ENCODE measurements at regions of chr20 and their contacts with region 1.

Region 1: DNA sequence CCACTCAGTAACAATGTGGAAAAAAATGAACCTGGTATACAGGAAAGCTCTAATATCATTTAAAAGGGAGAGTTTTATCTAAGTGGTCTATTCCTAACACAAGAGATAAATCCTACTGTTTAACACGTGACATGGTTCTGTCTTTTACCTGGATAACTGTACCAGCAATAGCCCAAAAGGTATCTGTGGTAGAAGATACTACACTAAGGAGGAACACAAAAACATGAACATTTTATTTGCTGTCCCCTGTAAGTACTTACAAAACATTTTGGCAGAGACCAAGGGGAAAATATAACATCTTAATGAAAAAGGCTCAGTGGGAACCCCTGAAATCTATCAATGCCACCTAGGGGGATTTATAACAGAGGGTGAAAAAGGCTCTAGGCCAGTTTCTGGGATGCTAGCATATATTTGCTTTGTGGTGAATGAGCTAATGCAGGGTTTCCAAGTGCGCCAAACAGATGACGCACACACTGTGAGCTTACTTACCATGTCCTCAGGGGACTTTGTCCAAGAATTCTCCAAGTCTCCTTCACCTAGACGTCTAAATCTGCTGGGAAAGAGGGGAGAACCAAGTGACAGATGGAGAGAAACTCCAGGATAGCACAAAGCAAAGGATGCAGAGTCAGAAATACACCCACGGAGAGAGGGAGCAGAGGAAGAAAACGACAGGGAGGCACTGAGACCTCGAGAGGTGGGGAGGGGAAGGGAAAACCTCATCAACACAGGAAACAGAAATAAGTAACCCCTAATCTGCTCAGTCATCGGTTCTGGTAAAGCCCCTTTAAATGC is 147.9 kb upstream of the PRND start:
- DNase-seq: no peak
- H3K4me3 ChIP-seq: no peak overlapping the region
- H3K27ac ChIP-seq: no peak overlapping the region
- H3K4me1 ChIP-seq: peaks cover 0 to 3% (median 1%) of the 10 kb centered on the region in 4 experiments; a peak in 2 of 7 replicates
- H3K27me3 ChIP-seq: peaks cover 0 to 1% (median 0%) of the 10 kb centered on the region in 4 experiments; a peak in 1 of 7 replicates
- CTCF ChIP-seq: no peak
- EP300 ChIP-seq: no peak
- POLR2A ChIP-seq: no peak
- RAD21 ChIP-seq: no peak

Region 2: GRCh38 chr20:4326195-4327065 is 247.3 kb before region 1 on chr20:
- CTCF ChIA-PET with region 1: no interaction called
- POLR2A ChIA-PET with region 1: no interaction called
- DNase-seq: no peak
- H3K4me3 ChIP-seq: no peak overlapping the region
- H3K27ac ChIP-seq: no peak overlapping the region
- H3K4me1 ChIP-seq: no peaks in the 10 kb centered on the region
- H3K27me3 ChIP-seq: no peaks in the 10 kb centered on the region
- CTCF ChIP-seq: no peak
- EP300 ChIP-seq: no peak
- POLR2A ChIP-seq: no peak
- RAD21 ChIP-seq: no peak

Region 3: DNA sequence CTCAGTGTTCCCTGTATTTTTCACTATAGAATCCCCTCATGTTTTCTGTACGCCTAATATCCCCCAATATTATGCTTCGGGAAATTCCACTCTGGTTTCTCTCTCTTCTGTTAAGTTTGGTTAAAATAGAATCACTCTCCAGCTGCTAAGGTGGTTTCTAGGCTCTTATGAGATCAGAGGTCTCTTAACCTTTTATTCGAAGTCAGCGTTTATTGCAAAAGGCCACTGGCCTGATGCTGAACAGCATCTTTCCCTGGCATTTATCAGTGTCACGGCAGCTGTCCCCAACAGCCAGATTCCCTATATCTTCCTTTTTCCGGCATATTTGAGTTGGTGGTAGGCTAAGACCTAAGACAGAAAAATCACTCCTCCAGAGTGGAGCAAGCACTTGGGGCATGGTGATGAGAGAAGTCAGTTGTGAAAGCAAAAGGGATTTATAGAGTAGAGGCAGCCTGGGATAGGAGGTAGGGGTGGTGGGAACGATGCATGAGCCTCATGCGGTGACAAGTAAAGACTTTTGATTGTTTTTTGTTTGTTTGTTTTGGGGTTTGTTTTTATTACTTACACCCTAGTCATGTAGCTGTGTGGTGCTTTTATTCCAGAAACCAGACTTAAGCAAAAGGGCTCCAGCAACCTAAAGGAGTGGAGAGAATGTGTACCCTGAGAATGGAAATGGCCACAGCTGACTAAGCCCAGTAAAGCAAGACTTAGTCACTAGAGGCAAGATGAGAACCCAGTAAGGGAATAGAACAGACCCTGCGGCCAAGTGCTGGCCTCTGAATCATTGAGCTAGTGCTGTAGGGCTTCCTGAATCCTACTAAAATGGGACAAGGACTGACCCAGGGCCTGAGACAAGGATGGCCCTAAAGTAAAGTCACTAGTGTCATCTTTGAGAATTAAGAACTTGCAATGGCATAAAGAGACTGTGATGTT is 85.1 kb before region 1 on chr20:
- CTCF ChIA-PET with region 1: no interaction called
- POLR2A ChIA-PET with region 1: no interaction called
- DNase-seq: no peak
- H3K4me3 ChIP-seq: no peak overlapping the region
- H3K27ac ChIP-seq: no peak overlapping the region
- H3K4me1 ChIP-seq: peaks cover 0 to 4% (median 0%) of the 10 kb centered on the region in 4 experiments; a peak in 2 of 7 replicates
- H3K27me3 ChIP-seq: no peaks in the 10 kb centered on the region; a peak in 1 of 7 replicates
- CTCF ChIP-seq: no peak
- EP300 ChIP-seq: no peak
- POLR2A ChIP-seq: no peak
- RAD21 ChIP-seq: no peak

Region 4: DNA sequence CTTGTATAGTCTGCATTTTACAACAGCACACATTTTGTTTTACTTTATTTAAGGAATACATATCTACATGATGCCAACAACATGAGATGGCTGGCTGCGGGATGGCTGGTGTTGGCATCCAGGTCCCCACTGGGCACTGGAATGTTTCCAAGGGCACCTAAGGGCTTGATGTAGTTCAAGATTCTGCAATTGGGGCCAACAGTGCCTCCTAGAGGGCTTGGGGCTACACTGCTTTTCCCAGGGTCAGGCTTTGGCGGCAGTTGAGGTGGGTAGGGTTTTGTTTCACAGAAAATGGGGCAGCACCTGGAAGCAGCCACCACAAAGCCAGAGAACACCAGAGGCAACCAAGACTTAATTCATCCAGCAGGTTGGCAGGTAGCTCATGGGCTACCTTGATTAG is 54.2 kb before region 1 on chr20:
- CTCF ChIA-PET with region 1: interaction called, 12 read pairs
- POLR2A ChIA-PET with region 1: no interaction called
- DNase-seq: peak in 1 of 2 experiments; percentile 84
- H3K4me3 ChIP-seq: no peak overlapping the region
- H3K27ac ChIP-seq: no peak overlapping the region
- H3K4me1 ChIP-seq: no peaks in the 10 kb centered on the region
- H3K27me3 ChIP-seq: no peaks in the 10 kb centered on the region
- CTCF ChIP-seq: peak; percentile 77 to 88 (median 82)
- EP300 ChIP-seq: no peak
- POLR2A ChIP-seq: no peak
- RAD21 ChIP-seq: peak; percentile 84 to 91

Region 5: DNA sequence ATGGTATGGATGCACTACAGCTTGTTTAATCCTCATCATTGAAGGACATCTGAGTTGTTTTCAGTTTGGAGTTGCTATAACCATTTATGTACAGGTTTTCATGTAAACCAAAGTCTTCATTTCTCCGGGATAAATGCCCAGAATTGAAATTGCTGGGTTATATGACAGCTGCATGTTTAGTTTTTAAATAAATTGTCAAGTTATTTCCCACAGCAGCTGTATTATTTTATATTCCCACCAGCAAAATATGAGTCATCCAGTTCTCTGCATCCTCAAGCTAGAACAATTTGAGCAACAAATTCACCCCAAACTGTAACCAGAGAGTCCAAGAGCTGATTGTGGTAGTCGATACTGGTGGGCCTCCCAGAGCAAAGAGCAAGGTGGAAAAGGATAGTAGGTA is 13.1 kb before region 1 on chr20:
- CTCF ChIA-PET with region 1: interaction called, 13 read pairs
- POLR2A ChIA-PET with region 1: no interaction called
- DNase-seq: no peak
- H3K4me3 ChIP-seq: no peak overlapping the region
- H3K27ac ChIP-seq: no peak overlapping the region
- H3K4me1 ChIP-seq: no peaks in the 10 kb centered on the region
- H3K27me3 ChIP-seq: no peaks in the 10 kb centered on the region
- CTCF ChIP-seq: no peak
- EP300 ChIP-seq: no peak
- POLR2A ChIP-seq: no peak
- RAD21 ChIP-seq: no peak

Region 6: GRCh38 chr20:4585104-4585753 is 11.5 kb after region 1 on chr20:
- CTCF ChIA-PET with region 1: interaction called, 65 read pairs
- POLR2A ChIA-PET with region 1: interaction called, 4 read pairs
- DNase-seq: no peak
- H3K4me3 ChIP-seq: no peak overlapping the region
- H3K27ac ChIP-seq: no peak overlapping the region
- H3K4me1 ChIP-seq: peaks cover 0 to 5% (median 2%) of the 10 kb centered on the region in 4 experiments; a peak in 3 of 7 replicates
- H3K27me3 ChIP-seq: peaks cover 0 to 4% (median 2%) of the 10 kb centered on the region in 4 experiments; a peak in 2 of 7 replicates
- CTCF ChIP-seq: no peak
- EP300 ChIP-seq: no peak
- POLR2A ChIP-seq: no peak
- RAD21 ChIP-seq: no peak